Activated CD8-positive, alpha-beta memory T cell treated with anti-CD3 and anti-CD28 coated beads, Interleukin-2, amount 10 ng/mL, durations not matched to agents 7 days and 5 days (primary cell): ENCODE measurements at regions of chr12 and their contacts with region 1.

Region 1: DNA sequence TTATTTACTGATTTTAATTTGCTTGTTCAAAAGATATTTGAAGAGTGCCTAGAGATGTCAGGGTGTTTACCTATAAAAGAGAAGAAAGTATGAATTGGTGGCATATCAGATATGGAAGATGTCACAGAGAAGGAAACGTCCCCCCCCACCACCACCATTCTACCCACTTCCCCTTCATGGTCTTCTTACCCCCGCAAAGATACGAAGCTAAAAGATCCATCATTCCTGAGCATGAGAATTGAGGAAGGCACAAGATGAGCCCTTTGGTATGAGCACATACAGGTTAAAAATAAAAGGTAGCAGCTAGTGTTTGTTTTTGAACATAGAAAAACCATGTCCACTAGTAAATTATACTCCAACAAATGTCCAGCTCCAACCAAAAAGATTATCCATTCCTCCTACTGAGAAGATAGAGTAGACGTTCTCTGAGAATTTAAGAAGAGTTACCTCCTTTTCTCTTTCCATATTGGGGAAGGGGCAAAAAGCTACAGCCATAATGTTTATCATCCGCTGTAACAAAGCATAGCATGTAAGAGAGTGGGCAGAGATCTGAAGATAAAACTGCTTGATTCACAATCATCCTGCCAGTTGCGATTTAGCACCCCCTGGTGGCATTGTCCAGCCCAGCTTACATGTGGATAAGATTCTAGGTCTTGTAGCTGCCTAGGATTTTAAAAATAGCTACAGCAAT is 29.1 kb downstream of the NFYB start:
- DNase-seq: peak; percentile 91
- ATAC-seq: peak; percentile 100
- H3K4me3 Mint-ChIP-seq: no peak overlapping the region
- H3K27ac Mint-ChIP-seq: peak overlapping the region; percentile 42
- H3K4me1 Mint-ChIP-seq: peaks cover 9% of the 10 kb centered on the region
- H3K27me3 Mint-ChIP-seq: no peaks in the 10 kb centered on the region

Region 2: GRCh38 chr12:103877934-103878510 is 230.9 kb before region 1 on chr12:
- CTCF ChIA-PET with region 1: interaction called, 14 read pairs
- DNase-seq: peak; percentile 68
- ATAC-seq: peak; percentile 81
- H3K4me3 Mint-ChIP-seq: no peak overlapping the region
- H3K27ac Mint-ChIP-seq: no peak overlapping the region
- H3K4me1 Mint-ChIP-seq: peaks cover 22% of the 10 kb centered on the region
- H3K27me3 Mint-ChIP-seq: no peaks in the 10 kb centered on the region

Region 3: GRCh38 chr12:103965590-103966504 is 143.1 kb before region 1 on chr12 and contains the start of gene TDG:
- CTCF ChIA-PET with region 1: interaction called, 12 read pairs
- DNase-seq: peak; percentile 99
- ATAC-seq: peak; percentile 97
- H3K4me3 Mint-ChIP-seq: peak within 1 kb of the TSS; percentile 99
- H3K27ac Mint-ChIP-seq: peak within 1 kb of the TSS; percentile 98
- H3K4me1 Mint-ChIP-seq: peaks cover 47% of the 10 kb centered on the region
- H3K27me3 Mint-ChIP-seq: no peaks in the 10 kb centered on the region
- total RNA-seq, gene TDG: 29.4 to 46.5 TPM

Region 4: GRCh38 chr12:104064031-104064822 is 44.7 kb before region 1 on chr12 and contains the start of gene HCFC2:
- CTCF ChIA-PET with region 1: interaction called, 55 read pairs
- DNase-seq: peak; percentile 94
- ATAC-seq: peak; percentile 93
- H3K4me3 Mint-ChIP-seq: peak within 1 kb of the TSS; percentile 91
- H3K27ac Mint-ChIP-seq: peak within 1 kb of the TSS; percentile 83
- H3K4me1 Mint-ChIP-seq: peaks cover 27% of the 10 kb centered on the region
- H3K27me3 Mint-ChIP-seq: peaks cover 19% of the 10 kb centered on the region
- total RNA-seq, gene HCFC2: 12.7 to 15.2 TPM

Region 5: DNA sequence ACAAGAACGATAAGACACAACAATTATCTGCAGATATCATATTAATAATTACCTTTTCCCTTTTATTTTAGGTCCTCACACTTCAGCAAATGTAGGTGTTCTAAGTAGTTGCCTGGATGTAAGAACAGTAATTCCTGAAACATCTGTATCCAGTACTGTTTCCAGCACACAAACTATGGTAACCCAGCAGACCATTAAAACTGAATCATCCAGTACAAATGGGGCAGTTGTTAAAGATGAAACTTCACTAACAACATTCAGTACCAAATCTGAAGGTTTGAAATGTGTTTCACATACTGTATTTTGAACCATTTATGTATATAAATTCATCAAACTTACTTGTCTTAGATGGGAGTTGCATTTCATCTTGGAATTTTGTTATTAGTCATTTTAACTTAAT is 13.6 kb before region 1 on chr12:
- CTCF ChIA-PET with region 1: interaction called, 23 read pairs
- DNase-seq: no peak
- ATAC-seq: no peak
- H3K4me3 Mint-ChIP-seq: no peak overlapping the region
- H3K27ac Mint-ChIP-seq: no peak overlapping the region
- H3K4me1 Mint-ChIP-seq: peaks cover 7% of the 10 kb centered on the region
- H3K27me3 Mint-ChIP-seq: no peaks in the 10 kb centered on the region

Region 6: DNA sequence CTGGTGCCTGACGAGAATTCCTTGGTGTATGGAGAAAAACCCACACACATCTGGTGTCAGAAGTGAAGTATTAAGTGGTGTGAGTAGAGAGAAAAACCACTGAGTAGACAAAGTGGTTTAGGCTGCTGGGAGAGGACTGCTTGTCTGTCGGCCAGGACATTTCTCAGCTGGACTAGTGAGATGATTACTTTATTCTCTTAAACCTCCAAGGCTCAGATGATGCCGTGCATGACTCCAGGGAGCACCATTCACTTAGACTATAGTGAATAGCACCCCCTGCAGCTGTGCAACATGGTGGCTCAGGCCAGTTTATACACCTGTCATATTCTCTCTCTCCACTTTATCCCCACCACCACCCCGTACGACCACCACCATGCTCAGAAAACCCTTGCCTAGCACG is 57.6 kb after region 1 on chr12:
- CTCF ChIA-PET with region 1: no interaction called
- DNase-seq: no peak
- ATAC-seq: no peak
- H3K4me3 Mint-ChIP-seq: no peak overlapping the region
- H3K27ac Mint-ChIP-seq: no peak overlapping the region
- H3K4me1 Mint-ChIP-seq: no peaks in the 10 kb centered on the region
- H3K27me3 Mint-ChIP-seq: peaks cover 13% of the 10 kb centered on the region

Region 7: GRCh38 chr12:104182144-104182543 is 73.2 kb after region 1 on chr12:
- CTCF ChIA-PET with region 1: no interaction called
- DNase-seq: no peak
- ATAC-seq: no peak
- H3K4me3 Mint-ChIP-seq: no peak overlapping the region
- H3K27ac Mint-ChIP-seq: no peak overlapping the region
- H3K4me1 Mint-ChIP-seq: peaks cover 15% of the 10 kb centered on the region
- H3K27me3 Mint-ChIP-seq: peaks cover 7% of the 10 kb centered on the region